PC-3 (cell line): ENCODE measurements at regions of chr12 and their contacts with region 1.

Region 1: GRCh38 chr12:42589465-42590329 is at the start of gene PRICKLE1:
- DNase-seq: peak; percentile 57
- ATAC-seq: peak; percentile 45
- H3K4me3 ChIP-seq: peak within 1 kb of the TSS; percentile 97
- H3K27ac ChIP-seq: 0 out of 2 replicates have a peak within 1 kb of the TSS, but pooled peaks have one; percentile 5
- H3K4me1 ChIP-seq: peaks cover 45% of the 10 kb centered on the region
- H3K27me3 ChIP-seq: no peaks in the 10 kb centered on the region
- CTCF ChIP-seq: no peak
- total RNA-seq, gene PRICKLE1: 16.2 and 17.2 TPM in 2 replicates

Region 2: GRCh38 chr12:42284876-42285275 is 304.8 kb before region 1 on chr12:
- CTCF ChIA-PET with region 1: no interaction called
- POLR2A ChIA-PET with region 1: no interaction called
- intact Hi-C with region 1: no loop called
- DNase-seq: peak; percentile 41
- ATAC-seq: peak; percentile 66
- H3K4me3 ChIP-seq: no peak overlapping the region
- H3K27ac ChIP-seq: no peak overlapping the region
- H3K4me1 ChIP-seq: no peaks in the 10 kb centered on the region
- H3K27me3 ChIP-seq: no peaks in the 10 kb centered on the region
- CTCF ChIP-seq: no peak

Region 3: DNA sequence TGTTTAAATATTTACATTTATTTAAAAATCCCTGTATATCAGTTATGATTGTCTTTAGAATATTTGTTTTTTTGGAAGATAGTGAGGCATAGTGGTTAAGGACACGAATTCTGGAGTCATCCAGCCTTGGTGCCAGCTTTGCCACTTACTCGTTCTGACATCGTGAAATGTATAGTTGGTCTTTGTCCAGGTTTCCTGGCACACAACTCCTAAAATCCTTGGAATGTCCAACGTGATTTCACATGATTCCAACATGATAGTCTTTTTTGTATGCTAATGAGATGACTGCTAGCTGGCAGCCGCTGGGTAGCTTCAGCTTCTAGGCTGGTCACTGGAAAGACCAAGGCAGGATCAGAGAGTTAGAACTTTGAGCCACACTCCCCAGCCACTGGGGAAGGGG is 65.0 kb before region 1 on chr12:
- CTCF ChIA-PET with region 1: interaction called, 10 read pairs
- POLR2A ChIA-PET with region 1: no interaction called
- intact Hi-C with region 1: no loop called
- DNase-seq: peak; percentile 53
- ATAC-seq: no peak
- H3K4me3 ChIP-seq: no peak overlapping the region
- H3K27ac ChIP-seq: no peak overlapping the region
- H3K4me1 ChIP-seq: no peaks in the 10 kb centered on the region
- H3K27me3 ChIP-seq: no peaks in the 10 kb centered on the region
- CTCF ChIP-seq: no peak

Region 4: GRCh38 chr12:42683933-42684801 is 94.5 kb after region 1 on chr12:
- CTCF ChIA-PET with region 1: no interaction called
- POLR2A ChIA-PET with region 1: no interaction called
- intact Hi-C with region 1: loop called (anchors 5 kb)
- DNase-seq: peak; percentile 71
- ATAC-seq: peak; percentile 75
- H3K4me3 ChIP-seq: no peak overlapping the region
- H3K27ac ChIP-seq: peak overlapping the region; percentile 49
- H3K4me1 ChIP-seq: peaks cover 40% of the 10 kb centered on the region
- H3K27me3 ChIP-seq: no peaks in the 10 kb centered on the region
- CTCF ChIP-seq: no peak

Region 5: GRCh38 chr12:42744539-42745156 is 155.0 kb after region 1 on chr12:
- CTCF ChIA-PET with region 1: no interaction called
- POLR2A ChIA-PET with region 1: no interaction called
- intact Hi-C with region 1: loop called (anchors 1 kb)
- DNase-seq: peak; percentile 90
- ATAC-seq: peak; percentile 34
- H3K4me3 ChIP-seq: no peak overlapping the region
- H3K27ac ChIP-seq: peak overlapping the region; percentile 33
- H3K4me1 ChIP-seq: peaks cover 44% of the 10 kb centered on the region
- H3K27me3 ChIP-seq: no peaks in the 10 kb centered on the region
- CTCF ChIP-seq: no peak

Region 6: DNA sequence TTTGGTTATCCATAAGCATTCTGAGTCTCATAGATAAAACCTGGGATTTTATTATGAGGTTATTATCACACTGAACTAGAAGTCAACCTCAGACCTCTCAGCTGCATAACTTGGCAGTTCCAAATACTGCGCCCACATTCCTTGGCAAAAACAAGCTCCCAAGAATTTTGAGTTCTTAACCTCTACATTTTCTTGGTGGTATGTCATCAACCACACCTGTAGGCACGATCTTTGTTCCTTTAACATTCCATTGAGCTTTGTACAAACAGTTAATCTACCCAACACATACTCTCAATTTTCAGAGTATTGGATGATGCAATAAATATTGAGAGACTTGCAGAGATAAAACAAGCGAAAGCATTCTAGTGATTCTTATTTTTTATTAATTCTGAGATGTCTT is 371.7 kb after region 1 on chr12:
- CTCF ChIA-PET with region 1: no interaction called
- POLR2A ChIA-PET with region 1: interaction called, 3 read pairs
- intact Hi-C with region 1: loop called (anchors 1 kb)
- DNase-seq: peak; percentile 97
- ATAC-seq: peak; percentile 49
- H3K4me3 ChIP-seq: no peak overlapping the region
- H3K27ac ChIP-seq: peak overlapping the region; percentile 78
- H3K4me1 ChIP-seq: peaks cover 85% of the 10 kb centered on the region
- H3K27me3 ChIP-seq: no peaks in the 10 kb centered on the region
- CTCF ChIP-seq: no peak

Region 7: DNA sequence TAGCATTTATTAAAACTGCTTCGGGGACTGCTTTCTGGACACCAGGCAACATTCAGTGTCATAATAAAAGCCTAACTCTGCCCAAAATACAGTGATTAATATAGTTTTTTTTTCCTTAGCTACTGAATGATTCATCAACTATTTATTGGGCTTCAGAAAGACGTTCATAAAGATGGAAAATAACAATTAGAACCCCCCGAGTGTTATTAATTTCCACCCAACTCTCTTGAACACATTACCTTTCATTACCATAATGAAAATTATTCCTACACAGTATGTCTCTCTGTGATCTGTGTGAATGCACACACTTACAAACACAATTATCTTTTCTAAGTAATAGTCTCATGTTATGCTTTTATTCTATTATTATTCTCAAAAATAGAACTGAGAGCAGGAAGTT is 489.3 kb after region 1 on chr12:
- CTCF ChIA-PET with region 1: interaction called, 17 read pairs
- POLR2A ChIA-PET with region 1: no interaction called
- intact Hi-C with region 1: no loop called
- DNase-seq: no peak
- ATAC-seq: no peak
- H3K4me3 ChIP-seq: no peak overlapping the region
- H3K27ac ChIP-seq: no peak overlapping the region
- H3K4me1 ChIP-seq: no peaks in the 10 kb centered on the region
- H3K27me3 ChIP-seq: no peaks in the 10 kb centered on the region
- CTCF ChIP-seq: no peak

Region 8: GRCh38 chr12:43338848-43339526 is 749.3 kb after region 1 on chr12:
- CTCF ChIA-PET with region 1: no interaction called
- POLR2A ChIA-PET with region 1: no interaction called
- intact Hi-C with region 1: loop called (anchors 5 kb)
- DNase-seq: peak; percentile 70
- ATAC-seq: peak; percentile 82
- H3K4me3 ChIP-seq: no peak overlapping the region; the same call in 1 of the 2 replicates
- H3K27ac ChIP-seq: peak overlapping the region; percentile 15; the same call in 1 of the 2 replicates
- H3K4me1 ChIP-seq: peaks cover 25% of the 10 kb centered on the region
- H3K27me3 ChIP-seq: no peaks in the 10 kb centered on the region
- CTCF ChIP-seq: peak; percentile 73